Natural killer cell (primary cell): ENCODE measurements at regions of chr17 and their contacts with region 1.

Region 1: DNA sequence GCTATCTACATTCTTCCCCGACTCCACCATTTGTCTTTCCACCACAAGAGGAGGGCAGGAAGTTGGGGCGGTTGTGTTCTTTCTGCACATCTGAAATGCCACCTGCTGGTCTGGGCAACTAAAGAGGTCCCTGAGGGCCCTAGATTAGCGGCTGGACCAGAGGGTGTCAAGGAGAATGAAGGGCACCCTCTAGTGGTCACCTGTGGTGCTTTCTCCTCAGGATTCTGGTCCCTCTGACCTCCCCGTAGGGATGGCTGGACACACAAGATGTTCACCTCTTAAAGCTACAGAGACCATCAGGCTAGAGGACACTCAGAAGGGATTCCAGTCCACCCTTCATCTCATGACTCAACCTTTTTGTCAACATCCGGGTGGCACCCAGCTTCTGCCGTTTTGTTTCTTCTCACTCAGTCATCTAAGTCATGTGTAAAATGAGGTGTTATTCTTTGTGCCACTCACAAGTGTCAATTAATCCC is 2.9 kb upstream of the SCIMP start:
- DNase-seq: peak; percentile 63 to 69
- ATAC-seq: peak; percentile 76 to 87 (median 80)
- H3K4me3 ChIP-seq: no peak overlapping the region
- H3K4me3 Mint-ChIP-seq: peak overlapping the region; percentile 52
- H3K27ac ChIP-seq: peak overlapping the region; percentile 75
- H3K27ac Mint-ChIP-seq: peak overlapping the region; percentile 91 to 96
- H3K4me1 ChIP-seq: peaks cover 82% of the 10 kb centered on the region
- H3K4me1 Mint-ChIP-seq: peaks cover 63 to 68% of the 10 kb centered on the region in 2 donors
- H3K27me3 ChIP-seq: no peaks in the 10 kb centered on the region
- H3K27me3 Mint-ChIP-seq: no peaks in the 10 kb centered on the region
- CTCF ChIP-seq: peak; percentile 35

Region 2: GRCh38 chr17:5226940-5227878 is 10.4 kb before region 1 on chr17:
- intact Hi-C with region 1: loop called (anchors 1 kb)
- DNase-seq: peak; percentile 64 to 67
- ATAC-seq: peak; percentile 75 to 87 (median 79)
- H3K4me3 ChIP-seq: no peak overlapping the region
- H3K4me3 Mint-ChIP-seq: peak overlapping the region; percentile 86
- H3K27ac ChIP-seq: peak overlapping the region; percentile 96
- H3K27ac Mint-ChIP-seq: peak overlapping the region; percentile 94 to 98
- H3K4me1 ChIP-seq: peaks cover 97% of the 10 kb centered on the region
- H3K4me1 Mint-ChIP-seq: peaks cover 59 to 79% of the 10 kb centered on the region in 2 donors
- H3K27me3 ChIP-seq: no peaks in the 10 kb centered on the region
- H3K27me3 Mint-ChIP-seq: no peaks in the 10 kb centered on the region
- CTCF ChIP-seq: no peak

Region 3: DNA sequence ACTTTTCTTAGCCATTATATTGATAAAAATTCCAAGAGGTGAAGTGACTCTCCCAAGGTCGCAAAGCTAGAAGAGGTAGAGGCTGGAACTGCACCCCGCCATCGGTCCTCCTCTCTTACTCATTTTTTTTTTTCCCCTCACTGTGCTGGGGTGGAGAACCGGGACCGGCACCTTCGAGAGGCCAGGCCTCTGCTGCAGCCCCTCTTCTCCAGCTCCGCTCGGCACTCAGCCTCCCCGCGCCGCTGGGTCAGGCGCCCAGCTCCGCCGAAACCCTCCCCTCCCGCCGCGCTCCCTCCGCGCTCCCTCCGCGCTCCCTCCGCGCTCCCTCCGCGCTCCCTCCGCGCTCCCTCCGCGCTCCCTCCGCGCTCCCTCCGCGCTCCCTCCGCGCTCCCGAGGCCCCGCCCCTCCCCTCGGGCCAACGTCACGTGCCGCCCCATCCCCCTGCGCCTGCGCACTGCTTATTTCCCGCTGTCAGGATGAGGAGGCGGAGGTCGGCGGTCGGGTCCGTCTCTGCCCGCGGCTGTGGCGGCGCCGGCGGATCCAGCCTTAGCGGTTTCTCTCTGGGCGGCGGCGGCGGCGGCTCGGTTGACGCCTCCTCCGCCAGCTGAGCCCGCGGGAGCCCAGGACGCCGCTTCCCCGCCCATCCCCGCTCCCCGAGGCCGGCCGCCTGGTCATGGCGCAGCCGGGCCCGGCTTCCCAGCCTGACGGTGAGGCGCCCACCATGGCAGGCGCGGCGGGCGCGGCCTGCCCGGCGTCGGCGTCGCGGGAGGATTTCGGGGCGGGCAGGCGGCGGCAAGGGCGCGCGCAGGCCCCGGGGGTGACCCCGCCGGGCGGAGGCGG is 44.5 kb after region 1 on chr17 and contains the start of gene RABEP1:
- intact Hi-C with region 1: loop called (anchors 5 kb)
- DNase-seq: peak; percentile 92 to 97
- ATAC-seq: peak; percentile 81 to 90 (median 89)
- H3K4me3 ChIP-seq: peak within 1 kb of the TSS; percentile 59
- H3K4me3 Mint-ChIP-seq: peak within 1 kb of the TSS; percentile 93
- H3K27ac ChIP-seq: peak within 1 kb of the TSS; percentile 48
- H3K27ac Mint-ChIP-seq: peak within 1 kb of the TSS; percentile 81 to 87
- H3K4me1 ChIP-seq: peaks cover 17% of the 10 kb centered on the region
- H3K4me1 Mint-ChIP-seq: peaks cover 27 to 33% of the 10 kb centered on the region in 2 donors
- H3K27me3 ChIP-seq: no peaks in the 10 kb centered on the region
- H3K27me3 Mint-ChIP-seq: no peaks in the 10 kb centered on the region
- CTCF ChIP-seq: no peak
- total RNA-seq, gene RABEP1: 44.1 to 64.0 (median 44.2) TPM

Region 4: DNA sequence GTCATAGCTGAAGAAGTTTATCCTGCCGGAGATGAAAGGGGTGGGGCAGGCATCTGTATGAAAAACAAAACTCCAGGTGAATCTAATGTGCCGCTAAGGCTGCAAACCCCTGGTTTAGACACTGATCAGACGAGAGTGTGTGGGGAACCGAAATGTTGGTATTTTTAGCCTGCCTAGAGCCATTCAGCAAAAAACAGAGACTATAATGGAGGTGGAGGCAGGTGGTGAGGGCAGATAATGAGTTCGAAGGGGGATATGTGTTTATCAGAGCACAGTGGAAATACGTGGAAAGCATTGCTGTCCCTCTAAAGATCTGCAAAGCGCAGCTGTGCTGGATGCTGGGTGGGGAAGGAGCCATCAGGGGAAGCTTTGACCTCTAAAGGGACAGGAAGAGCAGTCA is 705.1 kb after region 1 on chr17:
- intact Hi-C with region 1: no loop called
- DNase-seq: no peak
- ATAC-seq: no peak
- H3K4me3 ChIP-seq: no peak overlapping the region
- H3K4me3 Mint-ChIP-seq: no peak overlapping the region
- H3K27ac ChIP-seq: no peak overlapping the region
- H3K27ac Mint-ChIP-seq: no peak overlapping the region
- H3K4me1 ChIP-seq: no peaks in the 10 kb centered on the region
- H3K4me1 Mint-ChIP-seq: no peaks in the 10 kb centered on the region
- H3K27me3 ChIP-seq: no peaks in the 10 kb centered on the region
- H3K27me3 Mint-ChIP-seq: peaks cover 20 to 53% of the 10 kb centered on the region in 2 donors
- CTCF ChIP-seq: no peak